ENCODE measurements at regions of chr4 and their contacts with region 1.

Region 1: DNA sequence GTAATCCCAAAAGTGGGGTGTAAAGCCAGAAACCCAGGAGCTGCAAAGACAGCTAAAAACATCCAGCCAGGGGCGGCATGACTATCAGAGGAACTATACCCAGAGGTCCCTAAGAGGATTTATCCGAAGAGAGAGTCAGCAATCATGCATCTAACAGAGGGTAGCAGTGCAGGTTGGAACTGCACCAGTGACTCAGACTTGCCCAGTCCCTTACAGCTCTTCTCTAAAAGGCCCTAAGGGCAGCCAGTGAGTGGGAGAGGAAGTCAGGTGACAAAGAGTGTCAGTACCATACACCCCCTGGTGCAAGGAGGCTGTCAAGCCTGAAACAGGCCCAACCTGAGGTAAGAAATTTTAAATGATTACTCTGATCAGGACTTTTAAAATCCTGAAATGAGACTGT is 88.1 kb downstream of the CAMK2D start:
- DNase-seq: no peak
- ATAC-seq: peak; percentile 98
- H3K4me3 ChIP-seq: no peak overlapping the region
- H3K27ac ChIP-seq: no peak overlapping the region
- H3K4me1 ChIP-seq: no peaks in the 10 kb centered on the region
- H3K27me3 ChIP-seq: no peaks in the 10 kb centered on the region
- CTCF ChIP-seq: peak in 2 of 3 experiments; percentile 6 to 15; a peak in 2 of 6 replicates
- EP300 ChIP-seq: no peak
- POLR2A ChIP-seq: no peak
- RAD21 ChIP-seq: 0 out of 2 replicates have a peak, but pooled peaks have one; percentile 24

Region 2: DNA sequence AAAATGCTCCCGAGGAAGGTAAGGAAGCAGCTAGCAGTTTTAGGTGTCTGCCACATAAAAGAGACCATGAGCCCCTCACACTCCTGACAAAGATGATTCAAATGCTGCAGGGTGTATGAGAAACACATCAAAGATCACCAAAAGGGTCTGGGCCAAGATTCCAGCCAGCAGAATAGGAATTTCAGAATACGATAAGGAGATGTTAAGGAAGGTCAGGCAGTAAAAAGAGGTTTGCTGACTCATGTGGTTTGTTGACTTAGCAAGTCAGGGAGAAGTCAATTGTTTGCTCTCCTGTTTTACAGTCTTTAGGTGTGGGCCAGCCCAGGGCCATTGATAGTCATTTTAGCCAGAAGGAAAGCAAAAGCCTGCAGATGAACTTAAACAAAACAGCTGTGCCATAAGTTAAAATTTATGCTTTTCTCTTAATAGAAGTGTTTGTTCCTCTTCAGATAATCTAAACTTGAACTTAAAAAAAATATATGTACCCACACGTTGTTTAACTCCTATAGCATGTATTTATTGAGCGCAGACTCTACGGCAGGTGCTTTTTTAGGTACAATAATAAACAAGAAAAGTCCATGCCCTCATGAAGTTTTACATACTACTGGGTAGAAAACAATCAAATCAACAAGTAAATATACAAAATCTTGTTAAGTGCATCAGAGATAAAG is 27.5 kb before region 1 on chr4:
- CTCF ChIA-PET with region 1: interaction called, 10 read pairs
- POLR2A ChIA-PET with region 1: interaction called, 4 read pairs
- RAD21 ChIA-PET with region 1: interaction called, 22 read pairs
- SMC1A ChIA-PET with region 1: interaction called, 282 read pairs
- in situ Hi-C with region 1: no loop called
- intact Hi-C with region 1: no loop called
- DNase-seq: no peak
- ATAC-seq: no peak
- H3K4me3 ChIP-seq: no peak overlapping the region
- H3K27ac ChIP-seq: no peak overlapping the region
- H3K4me1 ChIP-seq: peaks cover 7% of the 10 kb centered on the region
- H3K27me3 ChIP-seq: no peaks in the 10 kb centered on the region
- CTCF ChIP-seq: no peak
- EP300 ChIP-seq: no peak
- POLR2A ChIP-seq: no peak
- RAD21 ChIP-seq: no peak

Region 3: GRCh38 chr4:113657586-113658233 is 15.7 kb before region 1 on chr4:
- CTCF ChIA-PET with region 1: interaction called, 5 read pairs
- POLR2A ChIA-PET with region 1: interaction called, 4 read pairs
- RAD21 ChIA-PET with region 1: interaction called, 10 read pairs
- SMC1A ChIA-PET with region 1: interaction called, 50 read pairs
- in situ Hi-C with region 1: no loop called
- intact Hi-C with region 1: no loop called
- DNase-seq: no peak
- ATAC-seq: no peak; the same call in 2 of the 3 replicates
- H3K4me3 ChIP-seq: no peak overlapping the region
- H3K27ac ChIP-seq: no peak overlapping the region
- H3K4me1 ChIP-seq: no peaks in the 10 kb centered on the region
- H3K27me3 ChIP-seq: no peaks in the 10 kb centered on the region
- CTCF ChIP-seq: no peak
- EP300 ChIP-seq: no peak
- POLR2A ChIP-seq: no peak
- RAD21 ChIP-seq: no peak

Region 4: DNA sequence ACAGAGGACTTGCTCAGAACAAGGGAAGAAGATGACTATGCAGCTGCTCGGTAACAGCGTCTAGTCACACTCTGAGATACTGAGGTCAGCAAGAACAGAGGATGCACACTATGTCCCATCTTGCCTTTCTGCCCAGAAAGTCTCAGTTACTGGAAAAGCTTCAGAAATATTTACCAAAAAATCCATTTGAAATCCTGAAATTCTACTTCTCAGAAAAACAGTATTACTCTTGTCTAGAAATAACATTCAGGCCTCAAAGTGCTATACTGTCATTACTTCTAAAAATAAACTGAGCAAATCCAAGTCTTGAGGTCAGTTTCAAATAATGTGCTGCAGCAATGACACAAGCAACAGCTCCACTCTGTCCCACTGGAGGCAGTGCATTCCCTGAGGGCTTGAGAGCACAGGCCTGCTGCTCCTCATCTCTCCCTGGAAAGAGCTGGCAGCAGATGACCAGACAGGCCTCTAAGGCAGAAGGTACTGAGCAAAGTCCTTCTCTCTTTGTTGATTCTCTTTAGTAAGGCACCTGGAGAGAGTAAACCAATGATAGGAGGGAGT is 11.2 kb after region 1 on chr4:
- CTCF ChIA-PET with region 1: interaction called, 9 read pairs
- POLR2A ChIA-PET with region 1: interaction called, 4 read pairs
- RAD21 ChIA-PET with region 1: interaction called, 10 read pairs
- SMC1A ChIA-PET with region 1: interaction called, 18 read pairs
- in situ Hi-C with region 1: no loop called
- intact Hi-C with region 1: no loop called
- DNase-seq: no peak
- ATAC-seq: peak; percentile 10; the same call in 2 of the 3 replicates
- H3K4me3 ChIP-seq: no peak overlapping the region
- H3K27ac ChIP-seq: no peak overlapping the region
- H3K4me1 ChIP-seq: peaks cover 32% of the 10 kb centered on the region
- H3K27me3 ChIP-seq: no peaks in the 10 kb centered on the region
- CTCF ChIP-seq: 0 out of 6 replicates have a peak, but pooled peaks of 1 of the 3 experiments have one; percentile 0
- EP300 ChIP-seq: no peak
- POLR2A ChIP-seq: no peak
- RAD21 ChIP-seq: 0 out of 2 replicates have a peak, but pooled peaks have one; percentile 4

Region 5: GRCh38 chr4:113756005-113756410 is 82.6 kb after region 1 on chr4:
- CTCF ChIA-PET with region 1: interaction called, 3 read pairs
- POLR2A ChIA-PET with region 1: no interaction called
- RAD21 ChIA-PET with region 1: interaction called, 7 read pairs
- SMC1A ChIA-PET with region 1: interaction called, 10 read pairs
- in situ Hi-C with region 1: no loop called
- intact Hi-C with region 1: no loop called
- DNase-seq: peak; percentile 51
- ATAC-seq: peak; percentile 72
- H3K4me3 ChIP-seq: peak overlapping the region; percentile 75; the same call in 1 of the 2 replicates
- H3K27ac ChIP-seq: peak overlapping the region; percentile 72
- H3K4me1 ChIP-seq: no peaks in the 10 kb centered on the region
- H3K27me3 ChIP-seq: no peaks in the 10 kb centered on the region
- CTCF ChIP-seq: no peak
- EP300 ChIP-seq: peak; percentile 84 to 95
- POLR2A ChIP-seq: no peak
- RAD21 ChIP-seq: no peak

Region 6: DNA sequence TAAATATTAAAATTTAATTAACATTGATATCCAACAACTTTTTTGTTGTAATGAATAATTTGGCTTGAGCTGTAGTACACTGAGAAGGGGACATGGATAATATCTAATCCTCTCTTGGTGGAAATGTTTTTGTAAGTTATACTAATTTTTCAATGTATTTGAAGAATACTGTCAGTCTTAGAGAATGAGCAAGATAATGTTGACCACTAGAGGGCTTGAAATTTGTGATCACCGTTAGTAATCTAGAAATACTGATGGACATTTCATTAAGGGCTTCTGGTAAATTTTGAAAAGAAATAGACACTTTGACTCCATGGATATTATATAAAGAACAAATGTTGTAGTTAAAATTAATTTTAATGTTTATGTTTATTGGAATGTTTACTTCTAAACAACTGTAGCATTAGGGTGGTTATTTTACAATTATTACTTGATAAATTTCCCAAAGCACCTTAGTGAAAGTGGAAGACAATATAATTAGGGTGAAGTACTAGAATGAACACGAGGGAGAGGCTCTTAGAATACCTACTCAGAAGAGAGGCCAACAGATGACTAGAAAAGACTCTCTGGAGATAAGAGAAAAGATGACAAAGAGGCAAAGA is 108.1 kb after region 1 on chr4:
- CTCF ChIA-PET with region 1: no interaction called
- POLR2A ChIA-PET with region 1: no interaction called
- RAD21 ChIA-PET with region 1: no interaction called
- SMC1A ChIA-PET with region 1: no interaction called
- in situ Hi-C with region 1: no loop called
- intact Hi-C with region 1: no loop called
- DNase-seq: no peak
- ATAC-seq: peak; percentile 80
- H3K4me3 ChIP-seq: no peak overlapping the region
- H3K27ac ChIP-seq: no peak overlapping the region
- H3K4me1 ChIP-seq: no peaks in the 10 kb centered on the region
- H3K27me3 ChIP-seq: no peaks in the 10 kb centered on the region
- CTCF ChIP-seq: peak; percentile 45 to 47 (median 47); a peak in 4 of 6 replicates
- EP300 ChIP-seq: no peak
- POLR2A ChIP-seq: no peak
- RAD21 ChIP-seq: peak; percentile 65